T-cell (primary cell): ENCODE measurements at regions of chr13 and their contacts with region 1.

Region 1: DNA sequence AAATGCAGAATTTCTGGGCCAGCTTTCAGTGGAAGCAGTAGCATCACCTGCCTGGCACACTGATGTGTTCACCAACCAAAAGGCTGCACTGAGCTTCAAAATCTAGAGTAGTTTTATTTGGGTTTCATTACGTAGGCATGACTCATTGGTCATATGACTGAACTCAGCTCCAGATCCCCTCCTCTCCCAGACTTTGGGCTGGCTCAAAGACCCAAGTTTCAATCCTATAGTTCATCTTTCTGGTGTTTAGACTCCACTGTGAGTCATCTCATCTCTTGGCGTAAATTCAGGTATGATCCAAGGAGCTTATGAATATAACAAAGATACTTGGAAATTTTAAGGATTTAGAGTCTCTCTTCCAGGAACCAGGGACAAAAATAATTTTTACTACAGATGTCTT is 17.7 kb downstream of the ZMYM5 start:
- DNase-seq: peak in 1 of 35 experiments; percentile 9
- ATAC-seq: no peak
- H3K4me3 ChIP-seq: no peak overlapping the region
- H3K4me3 Mint-ChIP-seq: no peak overlapping the region
- H3K27ac ChIP-seq: no peak overlapping the region
- H3K27ac Mint-ChIP-seq: peak overlapping the region in 1 of 2 donors; percentile 71
- H3K4me1 ChIP-seq: no peaks in the 10 kb centered on the region
- H3K4me1 Mint-ChIP-seq: peaks cover 15 to 38% (median 22%) of the 10 kb centered on the region in 3 donors
- H3K27me3 ChIP-seq: no peaks in the 10 kb centered on the region
- H3K27me3 Mint-ChIP-seq: no peaks in the 10 kb centered on the region

Region 2: DNA sequence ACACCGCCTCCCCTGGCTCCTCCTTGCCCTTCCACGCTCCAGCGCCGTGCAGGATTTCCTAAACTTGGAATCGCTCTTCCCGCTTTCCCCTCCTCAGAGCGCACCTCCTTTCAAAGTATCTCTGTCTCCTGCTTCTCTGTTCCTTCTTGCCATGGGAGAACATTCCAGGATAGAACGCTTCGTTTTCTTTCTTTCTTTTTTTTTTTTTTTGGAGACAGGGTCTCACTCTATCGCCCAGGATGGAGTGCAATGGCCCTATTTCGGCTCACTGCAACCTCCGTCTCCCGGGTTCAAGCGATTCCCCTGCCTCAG is 1057.4 kb after region 1 on chr13:
- CTCF ChIA-PET with region 1: no interaction called
- POLR2A ChIA-PET with region 1: interaction called in 1 of 2 experiments, 11 read pairs
- DNase-seq: no peak
- ATAC-seq: no peak
- H3K4me3 ChIP-seq: peak overlapping the region; percentile 79 to 91
- H3K4me3 Mint-ChIP-seq: peak overlapping the region; percentile 94
- H3K27ac ChIP-seq: peak overlapping the region; percentile 63
- H3K27ac Mint-ChIP-seq: peak overlapping the region; percentile 92 to 95
- H3K4me1 ChIP-seq: peaks cover 7 to 21% of the 10 kb centered on the region in 2 experiments
- H3K4me1 Mint-ChIP-seq: peaks cover 35 to 41% (median 38%) of the 10 kb centered on the region in 3 donors
- H3K27me3 ChIP-seq: peaks cover 0 to 3% of the 10 kb centered on the region in 2 experiments
- H3K27me3 Mint-ChIP-seq: peaks cover 2 to 7% of the 10 kb centered on the region in 2 donors